Spleen (tissue), 13 donors: ENCODE measurements at regions of chr2 and their contacts with region 1.

Region 1: GRCh38 chr2:223692191-223692947 is 90.2 kb upstream of the SCG2 start:
- DNase-seq: no peak
- H3K4me3 ChIP-seq: no peak overlapping the region
- H3K27ac ChIP-seq: no peak overlapping the region
- H3K4me1 ChIP-seq: no peaks in the 10 kb centered on the region
- H3K27me3 ChIP-seq: no peaks in the 10 kb centered on the region
- CTCF ChIP-seq: peak in 7 of 11 experiments; percentile 13 to 49 (median 36)
- POLR2A ChIP-seq: no peak

Region 2: GRCh38 chr2:223779877-223780276 is 87.5 kb after region 1 on chr2:
- intact Hi-C with region 1: loop called (anchors 10 kb)
- DNase-seq: no peak
- H3K4me3 ChIP-seq: no peak overlapping the region
- H3K27ac ChIP-seq: no peak overlapping the region
- H3K4me1 ChIP-seq: no peaks in the 10 kb centered on the region
- H3K27me3 ChIP-seq: no peaks in the 10 kb centered on the region
- CTCF ChIP-seq: peak in 8 of 11 experiments; percentile 23 to 58 (median 40)
- POLR2A ChIP-seq: no peak